Activated CD8-positive, alpha-beta T cell treated with anti-CD3 and anti-CD28 coated beads, Interleukin-2, amount 10 ng/mL, durations not matched to agents 7 days and 5 days (primary cell): ENCODE measurements at regions of chr1 and their contacts with region 1.

Region 1: GRCh38 chr1:156608036-156608674 is 6.9 kb upstream of the GPATCH4 start:
- DNase-seq: peak; percentile 83
- ATAC-seq: peak; percentile 96
- H3K4me3 Mint-ChIP-seq: no peak overlapping the region
- H3K27ac Mint-ChIP-seq: no peak overlapping the region
- H3K4me1 Mint-ChIP-seq: peaks cover 15% of the 10 kb centered on the region
- H3K27me3 Mint-ChIP-seq: peaks cover 16% of the 10 kb centered on the region

Region 2: GRCh38 chr1:156456622-156457465 is 151.3 kb before region 1 on chr1:
- CTCF ChIA-PET with region 1: interaction called, 10 read pairs
- POLR2A ChIA-PET with region 1: no interaction called
- DNase-seq: peak; percentile 97
- ATAC-seq: peak; percentile 88
- H3K4me3 Mint-ChIP-seq: peak overlapping the region; percentile 84
- H3K27ac Mint-ChIP-seq: peak overlapping the region; percentile 95
- H3K4me1 Mint-ChIP-seq: peaks cover 18% of the 10 kb centered on the region
- H3K27me3 Mint-ChIP-seq: peaks cover 15% of the 10 kb centered on the region

Region 3: DNA sequence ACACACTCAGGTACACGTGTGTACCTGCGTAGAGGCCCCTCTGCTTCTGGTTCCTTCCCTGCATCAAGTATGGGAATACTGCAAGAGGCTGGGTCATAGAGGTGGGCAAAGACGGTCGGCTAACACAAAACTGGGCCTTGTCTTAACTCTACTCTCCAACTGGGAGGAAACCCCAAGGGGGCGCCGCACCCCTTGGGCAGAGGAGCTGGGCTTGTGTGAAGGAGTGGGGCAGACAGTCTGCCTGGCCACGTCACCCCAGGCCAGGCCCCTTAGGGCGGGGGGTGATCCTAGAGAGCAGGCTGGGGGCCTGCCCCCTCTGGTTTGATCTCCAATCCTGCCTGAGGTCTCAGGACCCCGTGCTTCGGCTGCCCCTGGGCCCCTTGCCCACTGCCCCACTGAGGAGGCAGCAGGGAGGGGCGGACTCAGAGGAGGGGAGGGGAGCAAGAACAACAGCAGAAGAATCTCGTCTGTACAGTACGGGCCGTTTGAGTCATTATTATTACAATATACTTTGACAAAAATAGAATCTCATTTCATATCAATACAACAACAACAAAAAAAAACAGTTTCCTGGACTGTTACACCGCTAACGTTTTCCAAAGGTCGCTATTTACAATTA is 142.3 kb before region 1 on chr1:
- CTCF ChIA-PET with region 1: interaction called, 12 read pairs
- POLR2A ChIA-PET with region 1: no interaction called
- DNase-seq: no peak
- ATAC-seq: no peak
- H3K4me3 Mint-ChIP-seq: no peak overlapping the region
- H3K27ac Mint-ChIP-seq: no peak overlapping the region
- H3K4me1 Mint-ChIP-seq: peaks cover 12% of the 10 kb centered on the region
- H3K27me3 Mint-ChIP-seq: no peaks in the 10 kb centered on the region

Region 4: DNA sequence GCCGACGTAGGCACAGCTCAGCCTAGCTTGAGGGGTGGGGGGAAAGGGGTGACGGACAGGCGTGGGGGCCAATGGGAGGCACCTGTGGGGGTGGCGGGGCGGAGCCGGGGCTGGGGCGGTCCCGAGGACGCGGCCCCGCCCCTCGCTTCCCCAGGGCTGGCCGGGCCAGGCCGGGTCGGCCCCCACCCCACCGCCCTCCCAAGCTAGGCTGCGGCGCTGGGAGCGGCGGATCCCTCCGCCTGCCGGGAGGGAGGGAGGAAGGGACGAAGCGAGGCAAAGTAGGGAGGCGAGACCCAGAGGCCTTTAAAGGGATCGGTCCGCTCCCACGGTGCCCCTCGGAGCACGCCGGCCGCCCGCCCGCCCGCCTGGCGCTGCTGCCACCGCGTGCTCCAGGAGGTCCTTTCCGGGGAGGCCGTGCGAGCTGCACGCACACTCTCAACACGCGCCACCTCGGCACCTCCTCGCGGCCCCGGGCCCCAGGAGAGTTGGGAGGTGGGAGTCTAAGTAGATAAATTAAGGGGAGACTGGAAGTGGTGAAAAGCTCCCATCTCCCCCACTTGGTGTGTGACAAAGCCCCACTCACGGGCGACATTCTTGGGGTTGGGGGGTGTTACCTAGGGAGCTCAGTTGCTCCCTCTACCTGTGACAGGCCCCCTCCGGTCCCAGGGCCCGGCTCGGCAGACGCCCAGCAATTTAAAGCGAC is 107.2 kb before region 1 on chr1:
- CTCF ChIA-PET with region 1: interaction called, 17 read pairs
- POLR2A ChIA-PET with region 1: no interaction called
- DNase-seq: peak; percentile 95
- ATAC-seq: peak; percentile 73
- H3K4me3 Mint-ChIP-seq: peak overlapping the region; percentile 87
- H3K27ac Mint-ChIP-seq: peak overlapping the region; percentile 99
- H3K4me1 Mint-ChIP-seq: peaks cover 76% of the 10 kb centered on the region
- H3K27me3 Mint-ChIP-seq: no peaks in the 10 kb centered on the region

Region 5: GRCh38 chr1:156511644-156512043 is 96.5 kb before region 1 on chr1:
- CTCF ChIA-PET with region 1: no interaction called
- POLR2A ChIA-PET with region 1: no interaction called
- DNase-seq: no peak
- ATAC-seq: no peak
- H3K4me3 Mint-ChIP-seq: no peak overlapping the region
- H3K27ac Mint-ChIP-seq: no peak overlapping the region
- H3K4me1 Mint-ChIP-seq: peaks cover 35% of the 10 kb centered on the region
- H3K27me3 Mint-ChIP-seq: peaks cover 3% of the 10 kb centered on the region

Region 6: DNA sequence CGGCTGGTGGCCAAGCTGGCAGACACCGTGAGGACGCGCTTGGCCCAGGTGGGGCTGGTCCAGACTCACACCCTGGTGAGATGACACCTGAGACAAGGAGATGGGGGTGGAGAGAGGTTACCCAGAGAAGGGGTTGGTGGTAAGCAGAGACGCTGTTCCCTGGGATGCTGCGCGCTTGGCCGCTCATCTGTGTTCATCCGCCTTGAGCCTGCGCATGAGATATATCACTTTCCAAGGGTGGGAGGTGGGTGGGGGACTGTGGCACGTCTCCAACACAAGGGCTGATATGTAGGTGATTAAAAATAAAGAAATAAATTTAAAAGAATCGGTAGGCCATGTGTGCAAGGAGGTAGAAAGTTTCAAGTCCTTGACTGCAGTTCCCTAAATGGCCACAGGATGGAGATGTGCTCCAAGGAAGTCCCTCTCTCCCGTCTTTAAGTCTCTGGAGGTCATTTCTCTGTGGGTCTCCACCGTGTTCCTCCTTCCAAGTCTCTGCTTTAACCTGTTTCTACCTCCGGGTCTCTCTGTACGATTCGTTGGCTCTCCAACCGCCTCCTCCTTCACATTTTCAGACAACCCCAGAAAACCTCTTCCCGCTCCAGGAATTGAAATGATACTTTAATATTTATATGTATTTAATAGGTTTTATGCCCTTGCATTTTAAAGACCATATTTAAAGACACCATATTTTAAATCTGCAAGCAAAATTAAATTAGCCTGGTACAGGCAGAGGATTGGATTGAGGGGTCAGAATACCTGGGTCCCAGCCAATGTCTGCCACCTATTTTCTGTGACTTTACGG is 24.1 kb before region 1 on chr1:
- CTCF ChIA-PET with region 1: interaction called, 29 read pairs
- POLR2A ChIA-PET with region 1: no interaction called
- DNase-seq: peak; percentile 88
- ATAC-seq: peak; percentile 17
- H3K4me3 Mint-ChIP-seq: peak overlapping the region; percentile 86
- H3K27ac Mint-ChIP-seq: peak overlapping the region; percentile 93
- H3K4me1 Mint-ChIP-seq: peaks cover 39% of the 10 kb centered on the region
- H3K27me3 Mint-ChIP-seq: no peaks in the 10 kb centered on the region

Region 7: GRCh38 chr1:156591432-156592157 is 16.6 kb before region 1 on chr1 and contains the start of gene NAXE:
- CTCF ChIA-PET with region 1: interaction called, 29 read pairs
- POLR2A ChIA-PET with region 1: interaction called, 4 read pairs
- DNase-seq: peak; percentile 74
- ATAC-seq: peak; percentile 96
- H3K4me3 Mint-ChIP-seq: peak within 1 kb of the TSS; percentile 82
- H3K27ac Mint-ChIP-seq: peak within 1 kb of the TSS; percentile 87
- H3K4me1 Mint-ChIP-seq: peaks cover 24% of the 10 kb centered on the region
- H3K27me3 Mint-ChIP-seq: no peaks in the 10 kb centered on the region
- total RNA-seq, gene NAXE: 54.3 to 60.3 TPM

Region 8: DNA sequence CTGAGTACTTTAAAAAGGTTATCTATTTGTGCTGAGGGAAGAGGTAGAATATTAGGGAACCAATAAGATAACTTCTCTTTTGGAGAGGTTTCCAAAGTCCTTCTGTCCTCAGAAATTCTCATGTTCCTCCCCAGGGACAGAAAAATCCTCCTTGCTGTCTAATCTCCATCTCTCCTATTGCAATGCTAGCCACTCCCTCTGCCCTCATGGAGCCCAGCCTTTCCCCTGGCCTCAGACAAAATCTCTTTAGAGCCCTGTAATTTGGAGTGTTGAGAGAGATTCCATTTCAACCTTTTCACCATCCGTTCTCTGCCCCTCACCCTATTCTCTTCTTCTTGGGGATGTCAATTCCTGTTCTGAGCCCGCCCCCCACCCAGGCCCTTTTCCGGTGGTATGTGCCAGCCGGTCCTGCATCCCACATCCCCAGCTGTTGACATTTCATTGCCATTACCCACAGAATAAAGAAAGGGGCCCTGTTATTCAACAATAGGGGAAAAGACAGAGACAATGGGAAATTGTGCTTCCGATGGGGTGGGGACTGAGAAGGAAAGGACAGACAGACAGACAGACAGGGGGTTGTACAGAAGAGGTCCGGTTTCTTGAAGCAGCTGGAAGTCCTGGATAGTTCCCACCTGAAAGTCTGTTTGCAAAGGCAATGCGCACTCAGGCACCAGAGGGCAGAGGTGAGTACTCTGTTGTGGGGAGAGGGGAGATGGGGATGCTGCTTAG is 10.9 kb after region 1 on chr1 and contains the start of gene HAPLN2:
- CTCF ChIA-PET with region 1: interaction called, 19 read pairs
- POLR2A ChIA-PET with region 1: no interaction called
- DNase-seq: peak; percentile 37
- ATAC-seq: no peak
- H3K4me3 Mint-ChIP-seq: no peak within 1 kb of the TSS
- H3K27ac Mint-ChIP-seq: no peak within 1 kb of the TSS
- H3K4me1 Mint-ChIP-seq: peaks cover 5% of the 10 kb centered on the region
- H3K27me3 Mint-ChIP-seq: peaks cover 58% of the 10 kb centered on the region
- total RNA-seq, gene HAPLN2: not detected

Region 9: GRCh38 chr1:156860113-156860627 is 252.0 kb after region 1 on chr1:
- CTCF ChIA-PET with region 1: no interaction called
- POLR2A ChIA-PET with region 1: no interaction called
- DNase-seq: peak; percentile 68
- ATAC-seq: peak; percentile 62
- H3K4me3 Mint-ChIP-seq: peak overlapping the region; percentile 72
- H3K27ac Mint-ChIP-seq: peak overlapping the region; percentile 54
- H3K4me1 Mint-ChIP-seq: peaks cover 56% of the 10 kb centered on the region
- H3K27me3 Mint-ChIP-seq: peaks cover 39% of the 10 kb centered on the region